CD8-positive, alpha-beta memory T cell (primary cell): ENCODE measurements at regions of chr1 and their contacts with region 1.

Region 1: DNA sequence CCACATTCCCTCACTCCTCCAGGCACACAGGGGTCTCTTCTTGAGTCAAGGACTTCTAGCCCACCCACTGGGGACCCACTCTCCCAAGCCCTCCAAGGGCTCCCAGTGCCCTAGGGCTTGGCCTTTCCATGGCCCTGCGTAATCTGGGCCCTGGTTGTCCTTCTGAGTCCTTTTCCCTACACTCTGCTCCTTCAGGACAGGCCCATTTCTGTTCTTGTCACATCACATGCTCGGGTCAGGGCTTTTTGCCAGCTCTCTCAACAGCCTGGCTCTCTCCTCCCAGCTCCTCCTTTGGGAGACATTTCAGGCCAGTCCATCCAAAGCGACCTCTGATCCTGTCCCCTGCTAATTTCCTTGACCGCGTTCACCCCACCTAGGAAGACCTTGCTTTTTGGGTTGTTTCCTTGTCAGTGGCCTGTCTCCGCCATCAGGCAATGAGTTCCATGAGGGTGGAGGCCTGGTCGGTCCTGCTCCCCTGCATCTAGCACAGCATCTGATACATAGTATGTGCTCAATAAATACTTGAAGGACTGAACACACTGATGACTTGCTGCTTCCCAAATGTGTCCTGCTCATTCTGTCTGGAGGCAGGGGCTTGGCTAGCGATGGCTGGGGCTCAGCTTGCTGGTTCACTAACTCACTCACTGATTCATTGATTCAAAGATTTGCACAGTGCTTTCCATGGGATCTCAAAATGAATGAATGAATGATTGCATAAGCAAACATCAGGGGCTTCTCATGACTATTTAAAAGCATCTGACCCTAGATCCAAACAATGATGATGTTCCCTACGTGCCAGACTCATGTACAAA is 44.8 kb downstream of the DHRS3 start:
- DNase-seq: no peak
- H3K4me3 ChIP-seq: no peak overlapping the region
- H3K4me3 Mint-ChIP-seq: no peak overlapping the region
- H3K27ac ChIP-seq: no peak overlapping the region
- H3K27ac Mint-ChIP-seq: peak overlapping the region in 4 of 8 donors; percentile 21 to 80 (median 50)
- H3K4me1 ChIP-seq: no peaks in the 10 kb centered on the region
- H3K4me1 Mint-ChIP-seq: no peaks in the 10 kb centered on the region
- H3K27me3 ChIP-seq: no peaks in the 10 kb centered on the region
- H3K27me3 Mint-ChIP-seq: no peaks in the 10 kb centered on the region

Region 2: GRCh38 chr1:12314333-12314903 is 258.8 kb before region 1 on chr1:
- CTCF ChIA-PET with region 1: no interaction called
- POLR2A ChIA-PET with region 1: interaction called, 10 read pairs
- DNase-seq: peak in 1 of 5 donors; percentile 13
- H3K4me3 ChIP-seq: no peak overlapping the region
- H3K4me3 Mint-ChIP-seq: no peak overlapping the region
- H3K27ac ChIP-seq: no peak overlapping the region
- H3K27ac Mint-ChIP-seq: peak overlapping the region in 2 of 8 donors; percentile 3 to 6
- H3K4me1 ChIP-seq: no peaks in the 10 kb centered on the region
- H3K4me1 Mint-ChIP-seq: no peaks in the 10 kb centered on the region
- H3K27me3 ChIP-seq: no peaks in the 10 kb centered on the region
- H3K27me3 Mint-ChIP-seq: no peaks in the 10 kb centered on the region

Region 3: DNA sequence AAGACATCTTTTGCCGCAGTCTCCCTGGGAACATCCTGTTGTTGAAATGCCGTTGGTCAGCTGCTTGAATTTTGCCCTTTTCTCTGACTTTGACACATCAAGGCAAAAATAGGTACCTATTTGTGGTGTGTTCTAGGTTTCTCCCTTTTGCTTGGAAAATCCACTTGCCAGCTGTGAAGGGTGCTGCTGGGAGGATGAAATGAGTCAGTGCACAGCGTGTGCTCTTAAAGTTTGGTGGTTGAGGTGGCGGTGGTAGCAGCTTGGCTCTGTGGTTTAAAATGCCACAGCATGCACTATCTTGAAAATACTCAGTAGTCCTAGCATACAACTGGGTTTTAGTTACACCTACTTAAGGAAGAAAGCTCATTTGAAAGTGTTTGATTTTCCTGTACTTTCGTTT is 139.0 kb before region 1 on chr1:
- CTCF ChIA-PET with region 1: no interaction called
- POLR2A ChIA-PET with region 1: no interaction called
- DNase-seq: peak; percentile 14 to 67 (median 37)
- H3K4me3 ChIP-seq: peak overlapping the region; percentile 3
- H3K4me3 Mint-ChIP-seq: peak overlapping the region; percentile 37 to 88 (median 70)
- H3K27ac ChIP-seq: peak overlapping the region; percentile 43
- H3K27ac Mint-ChIP-seq: peak overlapping the region; percentile 68 to 96 (median 87)
- H3K4me1 ChIP-seq: peaks cover 61% of the 10 kb centered on the region
- H3K4me1 Mint-ChIP-seq: peaks cover 64 to 69% (median 65%) of the 10 kb centered on the region in 3 donors
- H3K27me3 ChIP-seq: no peaks in the 10 kb centered on the region
- H3K27me3 Mint-ChIP-seq: no peaks in the 10 kb centered on the region

Region 4: DNA sequence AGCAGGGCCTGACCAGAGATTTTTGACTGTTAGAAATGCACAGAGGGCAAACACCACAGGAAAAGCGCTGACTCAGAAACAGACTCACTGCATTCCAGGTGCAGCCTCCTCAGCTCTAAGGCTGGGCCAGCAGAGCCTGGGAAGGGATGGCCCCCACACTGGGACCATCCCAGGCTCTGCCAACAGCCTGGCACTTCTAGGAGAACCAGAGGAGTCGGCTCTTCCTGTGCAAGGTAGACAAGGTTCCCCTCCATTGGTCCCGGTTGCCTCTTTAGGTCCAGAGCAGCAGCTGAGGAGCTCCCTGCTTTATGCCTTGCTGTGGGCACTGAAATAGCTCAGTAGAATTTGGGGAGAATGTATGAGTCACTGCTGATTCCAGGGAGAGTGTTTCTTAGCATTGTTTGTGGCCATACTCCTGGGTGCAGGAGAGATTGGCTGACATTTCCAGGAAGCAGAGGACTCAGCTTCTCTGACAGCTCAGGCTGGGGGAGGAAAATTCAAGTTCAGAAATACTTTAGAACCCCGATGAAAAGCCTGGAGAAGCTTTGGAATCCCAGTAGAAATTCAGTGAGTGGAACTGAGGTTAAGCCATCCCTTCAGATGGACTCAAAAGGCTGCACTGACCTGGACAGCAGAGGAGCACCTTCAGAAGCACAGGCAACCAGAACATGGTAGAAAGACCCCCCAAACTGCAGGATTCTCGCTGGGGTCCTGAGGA is 237.6 kb after region 1 on chr1:
- CTCF ChIA-PET with region 1: no interaction called
- POLR2A ChIA-PET with region 1: no interaction called
- DNase-seq: no peak
- H3K4me3 ChIP-seq: no peak overlapping the region
- H3K4me3 Mint-ChIP-seq: no peak overlapping the region
- H3K27ac ChIP-seq: peak overlapping the region; percentile 24
- H3K27ac Mint-ChIP-seq: no peak overlapping the region
- H3K4me1 ChIP-seq: no peaks in the 10 kb centered on the region
- H3K4me1 Mint-ChIP-seq: no peaks in the 10 kb centered on the region
- H3K27me3 ChIP-seq: no peaks in the 10 kb centered on the region
- H3K27me3 Mint-ChIP-seq: peaks cover 21 to 42% of the 10 kb centered on the region in 2 donors